ENCODE measurements at regions of chr12 and their contacts with region 1.

Region 1: GRCh38 chr12:81022531-81022930 is 55.3 kb upstream of the ACSS3 start:
- DNase-seq: no peak
- H3K4me3 ChIP-seq: no peak overlapping the region
- H3K27ac ChIP-seq: no peak overlapping the region
- H3K4me1 ChIP-seq: no peaks in the 10 kb centered on the region
- H3K27me3 ChIP-seq: no peaks in the 10 kb centered on the region
- CTCF ChIP-seq: no peak

Region 2: DNA sequence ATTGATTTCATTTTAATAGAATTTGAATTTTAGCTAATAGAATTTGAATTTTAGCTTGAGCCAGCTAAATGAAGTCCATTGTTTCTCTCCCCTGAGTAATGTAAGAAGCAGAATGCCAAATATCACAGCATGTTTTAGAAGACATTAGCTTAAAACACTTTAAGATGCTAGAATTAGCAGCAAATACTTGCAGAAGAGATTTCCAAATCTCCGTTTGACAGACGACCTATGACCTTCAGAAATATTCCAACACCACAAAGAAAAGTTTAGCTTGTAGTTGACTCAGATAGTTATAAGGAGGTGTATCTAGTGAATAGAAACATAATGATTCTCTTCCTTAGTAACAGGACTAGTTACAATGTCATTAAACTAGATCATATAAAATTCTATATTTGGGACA is 366.8 kb before region 1 on chr12:
- CTCF ChIA-PET with region 1: no interaction called
- dilution Hi-C with region 1: no loop called
- in situ Hi-C with region 1: no loop called
- intact Hi-C with region 1: no loop called
- DNase-seq: no peak
- H3K4me3 ChIP-seq: no peak overlapping the region
- H3K27ac ChIP-seq: no peak overlapping the region
- H3K4me1 ChIP-seq: no peaks in the 10 kb centered on the region
- H3K27me3 ChIP-seq: peaks cover 4% of the 10 kb centered on the region
- CTCF ChIP-seq: no peak

Region 3: DNA sequence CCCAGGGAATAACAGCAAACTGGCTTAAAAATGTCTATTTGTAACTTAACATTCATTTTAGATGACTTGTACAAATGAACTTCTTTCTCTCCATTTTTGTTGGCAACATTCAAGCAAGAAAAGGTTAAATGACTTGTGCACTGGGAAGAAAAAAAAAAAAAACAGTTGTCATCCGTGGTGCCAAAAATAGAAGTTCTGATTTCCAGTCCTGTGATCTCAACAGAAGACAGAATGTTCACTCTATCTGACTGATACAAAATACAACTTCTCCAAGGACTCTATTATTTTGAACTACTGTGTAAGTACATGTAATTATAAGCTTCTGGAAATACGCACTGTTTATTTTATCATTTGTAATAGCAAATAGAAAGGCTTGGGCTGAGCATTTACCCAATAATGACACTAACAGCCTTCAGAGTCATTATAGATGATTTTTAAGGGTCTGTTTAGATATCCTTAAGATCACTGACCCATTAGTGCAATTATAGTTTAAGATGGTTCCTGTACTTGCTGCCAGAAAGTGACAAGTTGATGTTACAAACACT is 144.7 kb before region 1 on chr12:
- CTCF ChIA-PET with region 1: no interaction called
- dilution Hi-C with region 1: no loop called
- in situ Hi-C with region 1: no loop called
- intact Hi-C with region 1: no loop called
- DNase-seq: no peak
- H3K4me3 ChIP-seq: no peak overlapping the region
- H3K27ac ChIP-seq: no peak overlapping the region
- H3K4me1 ChIP-seq: no peaks in the 10 kb centered on the region
- H3K27me3 ChIP-seq: no peaks in the 10 kb centered on the region
- CTCF ChIP-seq: no peak

Region 4: DNA sequence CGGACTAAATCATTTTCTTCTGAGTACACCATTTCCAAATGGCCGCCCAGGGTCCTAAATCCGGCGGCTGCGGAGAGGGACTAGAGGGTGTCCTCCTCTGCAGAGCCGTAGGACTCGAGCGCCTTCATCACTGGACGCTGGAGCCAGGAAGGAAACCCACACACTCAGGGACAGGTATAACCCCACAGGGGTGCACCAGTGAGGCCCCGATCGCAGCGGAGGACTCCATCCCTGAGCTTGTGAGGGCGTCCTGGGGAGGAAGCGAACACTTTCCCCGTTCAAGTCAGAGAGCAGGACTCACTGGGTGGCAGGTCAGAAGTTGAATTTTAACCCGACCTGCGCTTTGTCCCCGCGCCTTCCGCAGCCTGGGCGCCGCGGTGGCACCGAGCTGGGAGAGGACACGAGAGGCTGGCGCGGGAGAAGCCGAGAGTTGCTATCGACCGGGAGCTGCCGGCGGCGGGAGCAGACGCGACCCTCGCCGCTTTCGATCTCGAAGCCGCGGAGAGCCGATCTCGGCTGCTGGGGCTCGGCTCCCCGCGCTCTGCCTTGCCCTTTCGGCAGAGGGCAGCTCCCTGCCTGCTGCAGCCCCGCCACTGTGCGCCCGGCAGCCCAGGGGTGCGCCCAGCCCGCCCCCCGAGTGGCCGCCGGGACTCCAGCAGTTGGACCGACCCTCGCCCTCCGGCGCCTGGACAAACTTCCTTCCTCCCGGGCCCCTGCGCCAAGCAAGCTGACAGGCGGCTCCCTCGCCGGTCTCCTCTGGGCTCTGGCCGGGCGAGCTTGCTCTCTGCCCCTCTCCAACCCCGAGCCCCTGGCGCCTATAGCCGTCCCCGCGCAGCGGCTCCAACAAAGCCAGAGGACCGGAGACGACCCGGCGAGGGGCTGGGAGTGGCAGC is 85.8 kb before region 1 on chr12:
- CTCF ChIA-PET with region 1: no interaction called
- dilution Hi-C with region 1: no loop called
- in situ Hi-C with region 1: no loop called
- intact Hi-C with region 1: no loop called
- DNase-seq: peak; percentile 25
- H3K4me3 ChIP-seq: peak overlapping the region; percentile 21 to 47 (median 42)
- H3K27ac ChIP-seq: no peak overlapping the region
- H3K4me1 ChIP-seq: peaks cover 11% of the 10 kb centered on the region
- H3K27me3 ChIP-seq: peaks cover 38% of the 10 kb centered on the region
- CTCF ChIP-seq: no peak

Region 5: DNA sequence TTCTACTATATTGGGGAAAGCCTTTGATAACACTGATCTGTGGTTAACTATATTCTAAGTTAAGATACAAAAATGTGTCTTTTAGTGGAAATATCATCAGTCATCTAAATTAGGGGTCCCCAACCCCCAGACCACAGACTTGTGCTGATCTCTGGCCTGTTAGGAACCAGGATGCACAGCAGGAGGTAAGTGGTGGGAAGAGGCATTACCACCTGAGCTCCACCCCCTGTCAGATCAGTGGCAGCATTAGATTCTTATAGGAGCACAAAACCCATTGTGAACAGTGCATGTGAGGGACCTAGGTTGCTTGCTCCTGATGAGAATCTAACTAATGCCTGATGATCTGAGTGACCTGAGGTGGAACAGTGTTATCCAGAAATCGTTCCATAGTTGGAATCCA is 56.5 kb before region 1 on chr12:
- CTCF ChIA-PET with region 1: no interaction called
- dilution Hi-C with region 1: no loop called
- in situ Hi-C with region 1: no loop called
- intact Hi-C with region 1: loop called (anchors 10 kb)
- DNase-seq: no peak
- H3K4me3 ChIP-seq: no peak overlapping the region
- H3K27ac ChIP-seq: no peak overlapping the region
- H3K4me1 ChIP-seq: no peaks in the 10 kb centered on the region
- H3K27me3 ChIP-seq: no peaks in the 10 kb centered on the region
- CTCF ChIP-seq: no peak

Measured in mammary epithelial cell (primary cell).